ENCODE measurements at regions of chr11 and their contacts with region 1.

Region 1: DNA sequence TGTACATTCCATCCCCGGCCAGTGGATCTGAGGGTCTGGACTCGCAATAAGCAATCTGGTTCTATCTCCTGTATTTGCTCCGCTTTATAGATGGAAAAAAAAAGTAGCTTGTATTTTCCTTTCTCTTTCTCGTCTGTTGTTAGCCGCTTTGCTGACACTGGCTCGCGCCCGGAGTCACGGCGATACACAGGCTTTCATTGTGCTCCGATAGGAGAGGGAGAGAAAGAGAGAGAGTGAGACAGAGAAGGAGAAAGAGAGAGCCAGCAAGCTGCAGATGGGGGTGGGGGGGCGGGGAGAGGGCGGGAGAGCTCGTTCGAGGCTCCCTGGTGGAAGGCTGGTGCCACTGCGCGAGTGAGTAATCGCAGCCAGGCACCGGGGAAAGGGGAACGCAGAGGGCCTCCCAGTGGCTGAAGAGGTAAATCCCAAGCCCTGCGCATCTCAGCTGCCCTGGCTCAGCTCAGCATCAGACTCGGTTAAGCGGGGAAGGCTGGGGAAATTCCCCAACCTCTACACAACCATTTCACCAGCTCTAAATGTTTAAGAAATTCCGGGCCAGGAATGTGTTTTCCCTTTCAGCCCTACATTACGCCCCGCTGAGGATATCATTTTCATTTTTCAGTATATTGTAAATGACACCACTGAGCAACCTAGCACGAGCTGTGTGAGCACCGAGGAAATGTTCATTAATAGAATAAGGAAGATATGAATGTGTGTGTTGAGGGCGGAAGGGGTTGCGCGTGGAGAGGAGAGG is at the start of gene MAML2:
- DNase-seq: peak; percentile 83
- H3K4me3 Mint-ChIP-seq: peak within 1 kb of the TSS; percentile 97
- H3K27ac Mint-ChIP-seq: peak within 1 kb of the TSS; percentile 92
- H3K4me1 Mint-ChIP-seq: peaks cover 31% of the 10 kb centered on the region
- H3K27me3 Mint-ChIP-seq: no peaks in the 10 kb centered on the region
- total RNA-seq, gene MAML2: 10.5 and 11.8 TPM in 2 replicates

Region 2: GRCh38 chr11:96054870-96055705 is 288.0 kb before region 1 on chr11:
- intact Hi-C with region 1: loop called (anchors 1 kb)
- DNase-seq: no peak
- H3K4me3 Mint-ChIP-seq: no peak overlapping the region
- H3K27ac Mint-ChIP-seq: no peak overlapping the region
- H3K4me1 Mint-ChIP-seq: peaks cover 53% of the 10 kb centered on the region
- H3K27me3 Mint-ChIP-seq: no peaks in the 10 kb centered on the region

Region 3: GRCh38 chr11:96188243-96189006 is 154.7 kb before region 1 on chr11:
- intact Hi-C with region 1: loop called (anchors 1 kb)
- DNase-seq: peak; percentile 16
- H3K4me3 Mint-ChIP-seq: peak overlapping the region; percentile 9
- H3K27ac Mint-ChIP-seq: peak overlapping the region; percentile 75
- H3K4me1 Mint-ChIP-seq: peaks cover 62% of the 10 kb centered on the region
- H3K27me3 Mint-ChIP-seq: no peaks in the 10 kb centered on the region

Region 4: GRCh38 chr11:96242971-96243647 is 100.0 kb before region 1 on chr11:
- intact Hi-C with region 1: loop called (anchors 1 kb)
- DNase-seq: peak; percentile 74
- H3K4me3 Mint-ChIP-seq: peak overlapping the region; percentile 79
- H3K27ac Mint-ChIP-seq: peak overlapping the region; percentile 89
- H3K4me1 Mint-ChIP-seq: peaks cover 46% of the 10 kb centered on the region
- H3K27me3 Mint-ChIP-seq: no peaks in the 10 kb centered on the region

Region 5: DNA sequence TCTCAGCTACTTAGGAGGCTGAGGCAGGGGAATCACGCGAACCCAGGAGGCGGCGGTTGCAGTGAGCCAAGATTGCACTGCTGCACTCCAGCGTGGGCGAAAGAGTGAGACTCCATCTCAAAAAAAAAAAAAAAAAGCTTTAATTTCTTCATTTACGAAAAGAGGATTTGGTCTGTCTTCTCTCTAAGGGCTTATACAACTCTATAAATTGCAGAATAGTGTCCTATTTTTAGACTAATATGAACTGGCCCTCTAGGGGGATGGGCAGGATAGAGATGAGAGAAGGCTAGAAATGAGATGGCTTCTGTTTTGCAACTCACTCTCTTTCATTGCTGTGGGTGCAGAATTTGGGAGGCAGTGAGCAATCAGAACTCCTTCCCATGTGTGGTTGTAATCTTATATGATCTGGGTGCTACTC is 11.4 kb before region 1 on chr11:
- intact Hi-C with region 1: loop called (anchors 1 kb)
- DNase-seq: no peak
- H3K4me3 Mint-ChIP-seq: no peak overlapping the region
- H3K27ac Mint-ChIP-seq: peak overlapping the region; percentile 41
- H3K4me1 Mint-ChIP-seq: peaks cover 51% of the 10 kb centered on the region
- H3K27me3 Mint-ChIP-seq: no peaks in the 10 kb centered on the region